GM12878 (cell line): ENCODE measurements at regions of chr20 and their contacts with region 1.

Region 1: GRCh38 chr20:63537525-63538203 is 488 bp upstream of the PTK6 start:
- DNase-seq: peak; percentile 93
- ATAC-seq: peak; percentile 97
- H3K4me3 ChIP-seq: peak overlapping the region; percentile 63
- H3K27ac ChIP-seq: peak overlapping the region; percentile 82
- H3K4me1 ChIP-seq: peaks cover 20% of the 10 kb centered on the region
- H3K27me3 ChIP-seq: no peaks in the 10 kb centered on the region
- CTCF ChIP-seq: peak; percentile 94 to 100 (median 97); a peak in 5 of 6 replicates
- EP300 ChIP-seq: peak in 1 of 2 experiments; percentile 10; a peak in 1 of 4 replicates
- POLR2A ChIP-seq: peak; percentile 84
- RAD21 ChIP-seq: peak; percentile 89

Region 2: DNA sequence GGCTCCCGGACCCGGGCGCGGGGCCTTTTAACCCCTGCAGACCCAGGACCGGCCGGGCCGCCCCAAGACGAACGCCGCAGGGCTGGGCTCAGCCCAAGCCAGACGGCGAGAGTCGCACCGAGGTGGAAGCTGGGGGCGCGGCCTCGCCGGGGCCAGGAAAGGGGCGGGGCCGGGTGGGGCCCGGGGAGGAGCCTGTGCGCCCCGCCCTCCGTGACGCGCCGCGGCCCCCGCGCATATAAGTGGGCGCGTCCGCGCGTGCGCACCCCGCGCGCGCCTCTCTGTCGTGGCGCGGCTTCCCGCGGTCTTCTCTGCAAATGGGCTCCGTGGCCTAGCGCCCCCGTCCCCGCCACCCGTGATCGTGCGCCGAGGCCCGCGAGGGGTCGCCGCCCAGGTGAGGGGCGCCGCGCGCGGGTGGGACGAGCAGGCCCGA is 17.1 kb before region 1 on chr20 and contains the start of gene PPDPF:
- CTCF ChIA-PET with region 1: interaction called, 10 read pairs
- POLR2A ChIA-PET with region 1: interaction called, 33 read pairs
- RAD21 ChIA-PET with region 1: interaction called, 20 read pairs
- SMC1A ChIA-PET with region 1: no interaction called
- in situ Hi-C with region 1: no loop called
- intact Hi-C with region 1: no loop called
- DNase-seq: no peak
- ATAC-seq: peak; percentile 90
- H3K4me3 ChIP-seq: peak within 1 kb of the TSS; percentile 86
- H3K27ac ChIP-seq: peak within 1 kb of the TSS; percentile 58
- H3K4me1 ChIP-seq: peaks cover 4% of the 10 kb centered on the region
- H3K27me3 ChIP-seq: no peaks in the 10 kb centered on the region
- CTCF ChIP-seq: no peak
- EP300 ChIP-seq: no peak
- POLR2A ChIP-seq: peak; percentile 88
- RAD21 ChIP-seq: no peak
- polyA plus RNA-seq, gene PPDPF: 0.32 to 2.8 TPM

Region 3: GRCh38 chr20:63580796-63581461 is 43.3 kb after region 1 on chr20:
- CTCF ChIA-PET with region 1: interaction called, 24 read pairs
- POLR2A ChIA-PET with region 1: interaction called, 3 read pairs
- RAD21 ChIA-PET with region 1: interaction called, 15 read pairs
- SMC1A ChIA-PET with region 1: interaction called, 11 read pairs
- in situ Hi-C with region 1: no loop called
- intact Hi-C with region 1: loop called (anchors 2 kb)
- DNase-seq: no peak
- ATAC-seq: peak; percentile 94
- H3K4me3 ChIP-seq: no peak overlapping the region
- H3K27ac ChIP-seq: no peak overlapping the region
- H3K4me1 ChIP-seq: no peaks in the 10 kb centered on the region
- H3K27me3 ChIP-seq: no peaks in the 10 kb centered on the region
- CTCF ChIP-seq: peak; percentile 65 to 86 (median 70)
- EP300 ChIP-seq: no peak
- POLR2A ChIP-seq: no peak
- RAD21 ChIP-seq: peak; percentile 84

Region 4: DNA sequence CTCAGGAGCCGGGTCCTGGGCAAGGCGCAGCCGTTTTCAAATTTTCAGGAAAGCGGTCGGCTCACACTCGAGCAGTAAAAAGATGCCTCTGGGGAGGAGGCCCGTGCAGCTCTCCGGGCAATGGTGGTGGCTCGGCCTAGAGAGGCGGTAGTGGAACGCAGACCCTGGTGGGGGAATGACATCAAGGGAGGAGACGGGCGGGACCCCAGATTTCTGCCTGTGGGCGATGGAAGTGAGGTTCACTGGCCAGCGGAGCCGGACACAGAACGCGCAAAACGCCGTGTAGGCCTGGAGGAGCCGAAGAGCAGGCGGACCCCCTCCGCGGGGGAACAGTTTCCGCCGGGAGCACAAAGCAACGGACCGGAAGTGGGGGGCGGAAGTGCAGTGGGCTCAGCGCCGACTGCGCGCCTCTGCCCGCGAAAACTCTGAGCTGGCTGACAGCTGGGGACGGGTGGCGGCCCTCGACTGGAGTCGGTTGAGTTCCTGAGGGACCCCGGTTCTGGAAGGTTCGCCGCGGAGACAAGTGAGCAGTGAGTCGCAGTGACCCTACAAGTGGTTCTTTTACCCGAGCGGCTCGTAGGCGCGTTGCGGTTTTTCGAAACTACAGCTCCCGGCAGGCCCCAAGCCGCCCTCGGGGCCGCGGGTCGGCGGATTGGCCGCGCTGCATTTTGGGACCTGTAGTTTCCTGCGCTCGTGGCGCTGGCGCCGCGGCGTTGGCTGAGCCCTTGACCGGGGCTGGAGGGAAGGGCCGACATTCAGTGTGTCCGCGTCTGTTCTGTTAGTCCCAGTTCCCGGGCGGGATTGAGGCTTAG is 120.5 kb after region 1 on chr20 and contains the start of gene RTEL1:
- CTCF ChIA-PET with region 1: interaction called, 4 read pairs
- POLR2A ChIA-PET with region 1: interaction called, 5 read pairs
- RAD21 ChIA-PET with region 1: interaction called, 24 read pairs
- SMC1A ChIA-PET with region 1: interaction called, 13 read pairs
- in situ Hi-C with region 1: no loop called
- intact Hi-C with region 1: no loop called
- DNase-seq: peak; percentile 59
- ATAC-seq: peak; percentile 98
- H3K4me3 ChIP-seq: peak within 1 kb of the TSS; percentile 93
- H3K27ac ChIP-seq: peak within 1 kb of the TSS; percentile 84
- H3K4me1 ChIP-seq: peaks cover 8% of the 10 kb centered on the region
- H3K27me3 ChIP-seq: peaks cover 2 to 7% of the 10 kb centered on the region in 2 experiments; a peak in 2 of 4 replicates
- CTCF ChIP-seq: no peak
- EP300 ChIP-seq: no peak
- POLR2A ChIP-seq: no peak; the same call in none of the 2 replicates
- RAD21 ChIP-seq: no peak
- polyA plus RNA-seq, gene RTEL1: 0.40 TPM in 1 of 2 experiments, not detected in the other

Region 5: DNA sequence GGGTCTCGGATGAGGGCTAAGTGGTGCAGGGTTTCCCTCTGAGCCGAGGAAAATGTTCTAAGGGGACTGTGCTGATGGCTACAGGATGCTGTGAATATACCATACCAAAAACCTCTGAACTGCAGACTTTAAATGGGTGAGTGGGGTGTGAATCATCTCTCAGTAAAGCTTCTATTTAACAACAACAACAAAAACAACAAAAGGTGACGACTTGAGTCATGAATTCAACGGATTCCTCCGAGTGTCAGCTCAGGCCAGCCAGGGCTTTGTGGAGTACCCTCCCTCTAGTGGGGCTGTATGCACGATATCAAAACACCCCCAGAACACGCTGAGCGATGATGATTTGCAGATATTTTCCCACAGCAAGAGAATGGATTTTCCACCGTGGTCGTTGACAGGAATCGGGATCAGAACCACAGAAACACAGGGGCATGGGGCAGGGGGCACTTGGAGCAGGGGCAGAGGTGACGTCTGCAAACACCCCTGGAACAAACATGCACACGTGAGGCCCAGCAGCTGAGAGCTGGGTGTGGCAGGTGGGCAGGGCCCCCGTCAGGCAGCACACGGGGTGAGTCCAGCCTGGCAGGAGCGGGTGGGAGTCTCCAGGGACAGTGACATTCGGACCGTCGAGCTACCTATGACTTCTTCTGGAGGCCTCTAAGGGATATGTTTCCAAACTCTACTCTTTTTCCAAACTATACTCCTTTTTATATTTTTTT is 240.5 kb after region 1 on chr20:
- CTCF ChIA-PET with region 1: no interaction called
- POLR2A ChIA-PET with region 1: no interaction called
- RAD21 ChIA-PET with region 1: no interaction called
- SMC1A ChIA-PET with region 1: no interaction called
- in situ Hi-C with region 1: no loop called
- intact Hi-C with region 1: no loop called
- DNase-seq: no peak
- ATAC-seq: no peak
- H3K4me3 ChIP-seq: no peak overlapping the region
- H3K27ac ChIP-seq: no peak overlapping the region
- H3K4me1 ChIP-seq: peaks cover 8% of the 10 kb centered on the region
- H3K27me3 ChIP-seq: no peaks in the 10 kb centered on the region
- CTCF ChIP-seq: no peak
- EP300 ChIP-seq: no peak
- POLR2A ChIP-seq: no peak
- RAD21 ChIP-seq: no peak

Region 6: GRCh38 chr20:63795178-63795830 is 257.6 kb after region 1 on chr20:
- CTCF ChIA-PET with region 1: no interaction called
- POLR2A ChIA-PET with region 1: no interaction called
- RAD21 ChIA-PET with region 1: no interaction called
- SMC1A ChIA-PET with region 1: no interaction called
- in situ Hi-C with region 1: no loop called
- intact Hi-C with region 1: loop called (anchors 5 kb)
- DNase-seq: no peak
- ATAC-seq: no peak
- H3K4me3 ChIP-seq: no peak overlapping the region
- H3K27ac ChIP-seq: no peak overlapping the region
- H3K4me1 ChIP-seq: no peaks in the 10 kb centered on the region
- H3K27me3 ChIP-seq: no peaks in the 10 kb centered on the region
- CTCF ChIP-seq: no peak
- EP300 ChIP-seq: no peak
- POLR2A ChIP-seq: no peak
- RAD21 ChIP-seq: no peak

Region 7: DNA sequence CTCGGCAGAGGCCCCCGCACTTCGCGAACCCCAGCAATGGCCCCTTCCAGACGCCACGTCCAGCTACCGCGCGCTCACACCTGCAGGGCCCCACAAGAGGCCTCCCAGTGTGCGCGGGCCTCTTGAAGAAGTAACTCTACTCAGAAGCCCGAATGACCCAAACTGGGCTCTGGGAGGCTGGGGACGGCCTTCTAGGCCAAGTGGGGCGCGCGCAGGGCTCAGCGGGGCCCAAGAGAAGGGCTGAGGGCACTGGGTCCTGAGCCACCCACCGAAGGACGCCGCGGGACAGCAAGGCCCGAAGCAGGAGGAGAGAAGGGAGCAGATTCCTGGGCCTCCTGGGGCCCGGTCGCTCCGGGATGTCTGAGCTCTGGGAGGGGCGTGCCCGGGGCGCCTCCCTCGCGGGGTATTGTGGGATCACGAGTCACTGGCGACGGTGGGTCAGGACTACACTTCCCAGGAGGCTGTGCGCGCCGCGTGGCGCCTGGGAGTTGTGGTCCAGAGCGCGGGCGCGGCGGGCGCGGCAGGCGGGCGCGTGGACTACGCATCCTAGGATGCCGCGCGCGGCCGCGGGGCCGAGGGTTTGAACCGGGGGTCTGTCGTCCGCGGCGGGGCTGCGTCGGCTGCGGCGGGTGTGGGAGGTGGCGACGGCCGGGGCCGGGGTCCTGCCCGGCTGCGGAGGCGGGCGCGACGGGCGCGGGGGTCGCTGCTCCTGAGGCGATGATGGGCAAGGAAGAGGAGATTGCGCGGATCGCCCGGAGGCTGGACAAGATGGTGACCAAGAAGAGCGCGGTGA is 525.1 kb after region 1 on chr20 and contains the start of gene TCEA2:
- CTCF ChIA-PET with region 1: interaction called, 6 read pairs
- POLR2A ChIA-PET with region 1: no interaction called
- RAD21 ChIA-PET with region 1: interaction called, 13 read pairs
- SMC1A ChIA-PET with region 1: no interaction called
- in situ Hi-C with region 1: no loop called
- intact Hi-C with region 1: no loop called
- DNase-seq: no peak
- ATAC-seq: peak; percentile 85
- H3K4me3 ChIP-seq: peak within 1 kb of the TSS; percentile 74
- H3K27ac ChIP-seq: peak within 1 kb of the TSS; percentile 56
- H3K4me1 ChIP-seq: peaks cover 41% of the 10 kb centered on the region
- H3K27me3 ChIP-seq: no peaks in the 10 kb centered on the region
- CTCF ChIP-seq: no peak
- EP300 ChIP-seq: no peak
- POLR2A ChIP-seq: peak; percentile 67
- RAD21 ChIP-seq: no peak
- polyA plus RNA-seq, gene TCEA2: 3.4 to 12.3 TPM